ENCODE measurements at regions of chr1 and their contacts with region 1.

Region 1: DNA sequence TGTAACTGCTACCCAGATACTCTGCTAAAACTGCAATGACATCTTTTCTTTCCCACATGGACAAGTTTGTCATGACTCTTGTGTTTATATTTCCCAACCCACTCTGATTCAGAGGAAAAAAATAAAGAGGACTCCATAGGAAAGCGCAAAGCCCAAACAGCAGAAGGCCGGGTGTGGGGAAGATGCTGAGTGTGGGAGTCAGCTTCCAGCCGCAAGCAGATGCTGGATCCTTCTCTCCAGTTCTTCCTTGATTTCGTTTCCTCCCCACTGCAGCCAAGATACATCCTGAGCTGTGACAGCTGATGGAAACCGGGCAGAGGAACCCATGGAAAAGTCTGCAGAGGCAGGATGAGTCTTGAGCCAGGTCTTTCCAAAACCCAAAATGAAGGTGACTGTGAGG is 498.2 kb downstream of the PLPP3 start:
- DNase-seq: no peak

Region 2: DNA sequence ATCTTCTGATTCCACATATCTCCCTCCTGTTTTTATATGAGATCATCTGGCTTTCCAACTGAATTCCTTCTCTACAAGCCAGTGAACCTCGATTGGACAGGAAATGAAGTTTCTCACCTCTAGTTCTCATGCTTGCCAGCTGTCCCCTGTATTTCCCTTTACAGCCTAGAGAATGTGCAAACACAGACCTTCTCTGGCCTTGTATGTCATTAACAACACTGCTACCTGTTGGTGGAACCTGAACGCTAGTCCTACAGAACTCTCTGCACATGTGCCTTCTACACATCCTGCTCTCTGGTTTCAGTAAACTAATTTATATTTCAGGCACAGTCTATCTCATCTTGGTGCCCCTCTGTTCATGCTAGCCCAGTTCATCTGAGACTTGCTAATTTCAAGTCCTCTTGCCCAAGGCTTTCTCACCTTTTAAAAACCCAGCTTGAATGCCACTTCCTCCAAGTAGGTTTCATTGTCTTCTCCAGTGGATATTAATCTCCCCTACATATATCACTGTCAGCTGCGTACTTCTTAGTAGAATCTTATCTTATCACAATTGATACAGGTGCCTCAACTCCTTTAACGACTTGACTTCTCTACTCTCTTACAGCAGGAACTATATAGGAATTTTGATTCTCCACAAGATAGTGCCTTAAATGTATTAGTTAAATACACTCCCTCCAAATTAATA is 51.7 kb before region 1 on chr1:
- intact Hi-C with region 1: no loop called
- DNase-seq: no peak

Region 3: DNA sequence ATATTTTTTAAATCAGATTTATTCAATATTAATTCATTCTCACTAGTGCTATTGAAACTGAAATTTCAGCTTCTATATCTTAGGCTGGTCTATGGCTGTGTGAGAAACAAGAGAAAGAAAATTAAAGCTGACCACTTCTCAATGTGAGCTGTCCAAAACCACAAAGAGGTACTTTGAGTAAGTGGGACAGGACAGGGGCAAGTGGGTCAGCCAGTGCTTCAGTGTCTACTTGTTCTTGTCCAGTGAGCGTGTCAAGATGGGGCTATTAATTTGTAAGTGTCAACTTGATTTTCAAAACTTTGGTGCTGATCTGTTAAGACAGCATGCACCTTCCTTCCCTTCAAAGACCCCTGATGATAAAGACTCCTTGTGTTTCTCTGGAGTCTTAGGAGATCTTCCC is 35.7 kb before region 1 on chr1:
- intact Hi-C with region 1: no loop called
- DNase-seq: no peak

Region 4: DNA sequence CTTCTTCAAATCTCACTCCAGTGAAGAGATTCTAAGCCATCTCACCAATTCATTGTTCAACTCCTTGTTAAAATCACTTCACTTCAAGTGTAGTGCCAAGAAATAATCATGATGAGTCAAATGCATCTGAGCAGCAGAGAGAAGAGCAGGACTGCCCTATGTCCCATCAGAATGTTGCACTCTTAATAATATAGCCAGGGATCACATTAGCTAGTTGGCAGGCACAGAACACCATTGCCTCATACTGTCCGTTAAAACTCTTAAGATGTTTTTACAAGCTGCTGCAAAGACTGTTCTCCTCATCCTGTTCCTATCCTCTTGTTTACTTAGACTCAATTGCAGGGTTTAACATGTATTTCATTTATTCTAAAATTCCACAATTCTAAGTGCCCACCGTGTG is 65.3 kb after region 1 on chr1:
- intact Hi-C with region 1: loop called (anchors 5 kb)
- DNase-seq: no peak

Region 5: GRCh38 chr1:56180520-56181190 is 99.5 kb after region 1 on chr1:
- intact Hi-C with region 1: no loop called
- DNase-seq: no peak